HepG2 (cell line): ENCODE measurements at regions of chr20 and their contacts with region 1.

Region 1: DNA sequence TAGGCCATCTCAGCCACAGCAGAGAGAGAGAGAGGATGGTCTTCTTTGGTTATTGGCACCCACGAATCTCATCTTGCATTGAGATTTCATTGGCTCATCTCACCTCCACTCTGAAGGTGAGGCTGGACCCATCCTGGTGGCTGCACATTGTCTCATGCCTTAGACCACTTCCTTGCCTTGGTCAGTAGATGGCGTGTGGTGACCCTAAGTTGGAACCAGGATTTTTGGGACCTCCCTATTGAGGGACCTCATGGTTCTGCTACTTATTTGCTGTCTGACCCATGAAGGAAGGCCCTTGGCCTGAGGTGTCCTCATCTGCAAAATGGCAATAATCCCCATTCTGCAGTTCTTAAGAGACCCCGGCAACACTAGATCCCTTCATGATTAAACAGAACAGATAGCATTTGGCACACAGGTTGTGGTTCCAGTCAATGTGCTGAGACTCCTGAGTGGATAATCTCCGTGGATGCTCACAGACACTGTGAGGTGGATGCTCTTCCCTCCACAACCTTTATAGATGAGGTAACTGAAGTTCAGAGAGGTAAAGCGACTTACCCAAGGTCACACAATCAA is 21.5 kb upstream of the AAR2 start:
- DNase-seq: peak; percentile 54
- ATAC-seq: peak; percentile 63
- H3K4me3 ChIP-seq: no peak overlapping the region
- H3K27ac ChIP-seq: no peak overlapping the region
- H3K4me1 ChIP-seq: peaks cover 9% of the 10 kb centered on the region
- H3K27me3 ChIP-seq: no peaks in the 10 kb centered on the region
- CTCF ChIP-seq: peak; percentile 91
- EP300 ChIP-seq: no peak
- POLR2A ChIP-seq: no peak
- RAD21 ChIP-seq: peak; percentile 77

Region 2: GRCh38 chr20:36399147-36399968 is 184.6 kb after region 1 on chr20:
- CTCF ChIA-PET with region 1: interaction called, 8 read pairs
- POLR2A ChIA-PET with region 1: no interaction called
- in situ Hi-C with region 1: no loop called
- intact Hi-C with region 1: loop called (anchors 1 kb)
- DNase-seq: peak; percentile 88
- ATAC-seq: peak; percentile 87
- H3K4me3 ChIP-seq: no peak overlapping the region; a peak in 1 of 6 replicates
- H3K27ac ChIP-seq: no peak overlapping the region
- H3K4me1 ChIP-seq: peaks cover 11% of the 10 kb centered on the region
- H3K27me3 ChIP-seq: peaks cover 0 to 27% of the 10 kb centered on the region in 2 experiments; a peak in 2 of 5 replicates
- CTCF ChIP-seq: peak; percentile 83
- EP300 ChIP-seq: peak in 1 of 2 experiments; percentile 61; a peak in 1 of 4 replicates
- POLR2A ChIP-seq: no peak
- RAD21 ChIP-seq: peak; percentile 90

Region 3: GRCh38 chr20:36439040-36439730 is 224.4 kb after region 1 on chr20:
- CTCF ChIA-PET with region 1: interaction called, 22 read pairs
- POLR2A ChIA-PET with region 1: no interaction called
- in situ Hi-C with region 1: no loop called
- intact Hi-C with region 1: loop called (anchors 1 kb)
- DNase-seq: peak; percentile 59
- ATAC-seq: peak; percentile 70
- H3K4me3 ChIP-seq: no peak overlapping the region
- H3K27ac ChIP-seq: no peak overlapping the region
- H3K4me1 ChIP-seq: no peaks in the 10 kb centered on the region
- H3K27me3 ChIP-seq: peaks cover 3 to 20% of the 10 kb centered on the region in 2 experiments; a peak in 3 of 5 replicates
- CTCF ChIP-seq: peak; percentile 98
- EP300 ChIP-seq: no peak
- POLR2A ChIP-seq: no peak
- RAD21 ChIP-seq: peak; percentile 95